ENCODE measurements at regions of chr12 and their contacts with region 1.

Region 1: DNA sequence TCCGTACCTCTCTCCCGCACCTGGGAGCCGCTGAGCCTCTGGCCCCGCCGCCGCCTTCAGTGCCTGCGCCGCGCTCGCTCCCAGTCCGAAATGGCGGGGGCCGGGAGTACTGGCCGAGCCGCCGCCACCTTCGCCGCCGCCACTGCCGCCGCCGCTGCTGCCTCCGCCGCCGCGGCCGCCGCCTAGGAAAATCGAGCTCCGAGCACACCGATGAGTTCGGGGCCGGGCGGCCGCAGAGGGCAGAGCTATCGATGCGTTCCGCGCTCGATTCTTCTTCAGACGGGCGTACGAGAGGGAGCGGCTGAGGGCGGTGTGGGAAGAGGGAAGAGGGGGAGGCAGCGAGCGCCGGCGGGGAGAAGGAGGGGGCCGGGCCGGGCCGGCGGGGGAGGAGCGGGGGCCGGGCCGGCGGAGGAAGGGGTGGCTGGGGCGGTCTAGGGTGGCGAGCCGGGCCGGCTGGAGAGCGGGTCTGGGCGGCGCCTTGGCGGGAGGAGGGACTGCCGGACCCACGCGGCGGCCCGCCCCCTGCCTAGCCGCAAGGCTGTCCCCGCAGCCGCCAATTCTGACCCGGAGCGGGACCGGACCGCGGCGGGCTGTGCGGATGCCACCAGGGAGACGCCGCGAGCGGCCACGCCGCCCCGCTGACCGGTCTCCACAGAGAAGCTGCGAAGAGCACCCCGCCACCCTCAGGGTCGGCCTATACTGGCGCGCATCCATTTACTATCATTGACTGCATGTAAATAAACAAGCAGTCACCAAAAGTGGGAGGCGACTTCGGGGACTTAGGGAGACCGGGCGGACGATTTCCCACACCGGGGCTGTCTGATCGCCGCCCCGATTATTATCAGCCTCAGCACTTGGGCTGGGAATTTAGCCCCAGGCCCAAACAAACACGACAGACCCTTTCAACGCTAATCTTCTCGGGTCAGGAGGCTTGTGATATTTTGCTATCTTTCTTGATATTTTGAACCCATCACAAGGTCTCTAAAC is at the start of gene KRAS:
- DNase-seq: peak; percentile 95
- ATAC-seq: peak; percentile 87
- H3K4me3 Mint-ChIP-seq: peak within 1 kb of the TSS; percentile 83
- H3K27ac Mint-ChIP-seq: peak within 1 kb of the TSS; percentile 89
- H3K4me1 Mint-ChIP-seq: peaks cover 34% of the 10 kb centered on the region
- H3K27me3 Mint-ChIP-seq: peaks cover 3% of the 10 kb centered on the region
- total RNA-seq, gene KRAS: 11.3 to 15.4 TPM

Region 2: DNA sequence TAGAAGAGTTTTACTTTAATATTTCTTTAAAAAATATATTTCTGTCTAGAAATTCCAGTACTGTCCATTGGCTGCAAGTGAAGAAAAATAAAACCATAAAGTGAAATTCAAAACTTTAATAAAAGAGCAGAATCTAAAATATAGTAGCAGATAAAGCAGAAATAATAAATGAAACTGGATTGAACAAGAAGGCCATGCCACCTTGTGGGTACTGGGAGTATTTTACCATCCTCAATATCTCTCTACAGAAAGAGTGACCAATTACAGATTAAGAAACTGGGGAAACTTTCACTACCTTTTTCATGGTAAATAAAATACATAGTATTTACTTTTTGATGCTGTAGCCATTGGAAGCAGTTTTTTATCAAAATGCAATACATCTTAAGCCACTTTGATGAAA is 522.7 kb before region 1 on chr12:
- CTCF ChIA-PET with region 1: no interaction called
- POLR2A ChIA-PET with region 1: no interaction called
- intact Hi-C with region 1: no loop called
- DNase-seq: no peak
- ATAC-seq: no peak
- H3K4me3 Mint-ChIP-seq: no peak overlapping the region
- H3K27ac Mint-ChIP-seq: peak overlapping the region; percentile 37
- H3K4me1 Mint-ChIP-seq: peaks cover 53% of the 10 kb centered on the region
- H3K27me3 Mint-ChIP-seq: no peaks in the 10 kb centered on the region

Region 3: DNA sequence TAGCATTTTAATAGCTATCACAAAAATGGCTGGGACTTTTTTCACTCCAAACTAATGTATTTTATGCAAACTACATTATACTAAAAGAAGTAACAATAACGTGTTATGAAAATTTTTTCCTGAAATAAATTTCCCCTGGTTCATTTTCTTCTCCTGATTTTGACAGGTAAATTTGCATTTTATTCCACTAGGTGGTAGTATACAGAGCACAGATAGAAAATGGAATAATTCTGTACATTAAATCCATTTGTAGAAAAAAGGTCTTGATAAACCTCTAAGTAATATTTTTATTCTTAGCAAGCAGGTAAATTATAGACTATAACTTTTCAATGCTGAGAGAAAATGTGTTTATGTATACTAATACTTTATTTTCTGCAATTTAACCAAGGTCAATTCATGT is 398.6 kb before region 1 on chr12:
- CTCF ChIA-PET with region 1: no interaction called
- POLR2A ChIA-PET with region 1: no interaction called
- intact Hi-C with region 1: no loop called
- DNase-seq: no peak
- ATAC-seq: no peak
- H3K4me3 Mint-ChIP-seq: no peak overlapping the region
- H3K27ac Mint-ChIP-seq: no peak overlapping the region
- H3K4me1 Mint-ChIP-seq: peaks cover 22% of the 10 kb centered on the region
- H3K27me3 Mint-ChIP-seq: peaks cover 7% of the 10 kb centered on the region

Region 4: DNA sequence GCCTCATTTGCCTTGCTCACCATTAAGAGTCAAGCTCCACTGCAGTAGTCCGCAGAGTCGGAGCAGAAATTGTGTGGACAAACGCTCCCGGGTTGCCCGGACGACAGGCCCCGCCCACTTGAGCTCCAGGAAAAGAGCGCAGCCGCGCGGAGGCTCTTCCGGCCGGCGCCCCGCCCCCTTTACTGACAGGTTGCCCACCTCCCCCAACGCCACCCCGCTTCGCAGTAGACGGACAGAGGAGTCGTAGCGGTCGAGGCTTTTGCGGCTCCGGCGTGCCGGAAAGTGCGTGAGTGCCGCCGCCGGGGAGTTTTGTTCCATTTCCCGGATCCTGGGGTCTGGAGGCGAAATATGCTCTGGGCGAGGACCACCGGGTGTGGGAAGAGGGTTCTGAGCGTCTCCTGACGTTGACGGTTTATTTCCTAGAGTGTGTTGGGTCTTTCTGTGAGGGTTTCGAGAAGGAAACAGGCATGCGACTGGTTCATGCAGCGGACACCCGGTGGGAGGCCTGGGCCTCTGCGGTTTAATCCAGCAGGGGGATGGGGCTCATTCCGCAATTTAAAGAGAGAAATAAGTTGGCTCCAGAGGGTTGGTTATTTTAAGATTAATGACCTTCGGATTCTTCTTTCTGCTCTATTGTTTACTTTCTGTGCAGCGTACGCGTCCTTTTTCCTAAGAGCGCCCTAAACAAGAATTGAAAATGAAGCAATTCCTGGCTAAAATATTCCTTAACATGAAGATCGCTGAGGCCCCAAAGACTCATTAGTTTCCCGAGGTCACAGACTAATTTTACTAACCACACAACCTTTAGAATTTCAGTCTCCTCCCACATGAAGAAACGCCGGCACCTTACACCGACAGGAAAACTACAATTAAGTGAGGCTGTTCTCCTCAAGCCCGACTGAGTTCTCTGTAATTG is 55.7 kb before region 1 on chr12 and contains the starts of genes DNAI7 and ETFRF1:
- CTCF ChIA-PET with region 1: interaction called, 4 read pairs
- POLR2A ChIA-PET with region 1: interaction called, 6 read pairs
- intact Hi-C with region 1: loop called (anchors 1 to 2 kb)
- DNase-seq: peak; percentile 97
- ATAC-seq: peak; percentile 98
- H3K4me3 Mint-ChIP-seq: peak within 1 kb of the TSS; percentile 91
- H3K27ac Mint-ChIP-seq: peak within 1 kb of the TSS; percentile 96
- H3K4me1 Mint-ChIP-seq: peaks cover 29% of the 10 kb centered on the region
- H3K27me3 Mint-ChIP-seq: no peaks in the 10 kb centered on the region
- total RNA-seq, gene DNAI7: not detected
- total RNA-seq, gene ETFRF1: 11.7 to 15.4 TPM

Region 5: GRCh38 chr12:25276199-25276937 is 25.3 kb after region 1 on chr12:
- CTCF ChIA-PET with region 1: interaction called, 3 read pairs
- POLR2A ChIA-PET with region 1: no interaction called
- intact Hi-C with region 1: loop called in 1 of 2 experiments (anchors 2 kb)
- DNase-seq: peak; percentile 90
- ATAC-seq: peak; percentile 97
- H3K4me3 Mint-ChIP-seq: peak overlapping the region; percentile 7
- H3K27ac Mint-ChIP-seq: peak overlapping the region; percentile 40
- H3K4me1 Mint-ChIP-seq: peaks cover 31% of the 10 kb centered on the region
- H3K27me3 Mint-ChIP-seq: no peaks in the 10 kb centered on the region

Region 6: GRCh38 chr12:25320123-25321006 is 69.3 kb after region 1 on chr12:
- CTCF ChIA-PET with region 1: no interaction called
- POLR2A ChIA-PET with region 1: no interaction called
- intact Hi-C with region 1: loop called (anchors 2 to 5 kb)
- DNase-seq: peak; percentile 13
- ATAC-seq: peak; percentile 76
- H3K4me3 Mint-ChIP-seq: peak overlapping the region; percentile 27
- H3K27ac Mint-ChIP-seq: peak overlapping the region; percentile 21
- H3K4me1 Mint-ChIP-seq: peaks cover 55% of the 10 kb centered on the region
- H3K27me3 Mint-ChIP-seq: peaks cover 1% of the 10 kb centered on the region

Region 7: DNA sequence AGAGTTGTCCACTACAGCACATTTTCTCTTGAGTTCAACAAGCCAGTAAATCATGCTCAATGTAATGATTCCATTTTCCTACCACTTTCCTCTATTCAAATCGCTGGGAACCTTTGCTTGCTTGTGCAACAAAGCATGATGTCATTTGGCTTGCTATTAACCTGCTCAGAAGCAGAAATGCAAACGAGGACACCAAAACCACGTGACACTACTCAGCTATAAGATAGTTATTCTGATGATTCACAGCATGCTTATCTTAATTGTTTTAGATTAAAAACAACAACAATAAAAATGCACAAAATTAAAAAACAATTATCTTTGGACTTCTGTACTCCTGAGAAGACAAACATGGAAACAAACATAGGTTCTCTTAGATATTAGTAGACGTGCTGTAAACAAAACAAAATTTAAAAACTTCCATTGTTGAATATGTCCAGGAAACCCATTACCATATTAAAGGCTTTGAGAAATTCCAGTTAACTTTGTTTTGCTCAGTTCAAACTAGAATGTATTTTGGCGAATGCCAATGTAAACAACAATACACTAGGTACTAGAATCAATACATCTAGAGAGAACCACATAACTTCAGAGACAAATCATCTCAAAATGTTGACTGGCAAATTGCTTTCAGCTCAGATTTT is 77.2 kb after region 1 on chr12:
- CTCF ChIA-PET with region 1: no interaction called
- POLR2A ChIA-PET with region 1: no interaction called
- intact Hi-C with region 1: loop called (anchors 2 to 5 kb)
- DNase-seq: no peak
- ATAC-seq: no peak
- H3K4me3 Mint-ChIP-seq: no peak overlapping the region
- H3K27ac Mint-ChIP-seq: no peak overlapping the region
- H3K4me1 Mint-ChIP-seq: peaks cover 23% of the 10 kb centered on the region
- H3K27me3 Mint-ChIP-seq: no peaks in the 10 kb centered on the region

Region 8: DNA sequence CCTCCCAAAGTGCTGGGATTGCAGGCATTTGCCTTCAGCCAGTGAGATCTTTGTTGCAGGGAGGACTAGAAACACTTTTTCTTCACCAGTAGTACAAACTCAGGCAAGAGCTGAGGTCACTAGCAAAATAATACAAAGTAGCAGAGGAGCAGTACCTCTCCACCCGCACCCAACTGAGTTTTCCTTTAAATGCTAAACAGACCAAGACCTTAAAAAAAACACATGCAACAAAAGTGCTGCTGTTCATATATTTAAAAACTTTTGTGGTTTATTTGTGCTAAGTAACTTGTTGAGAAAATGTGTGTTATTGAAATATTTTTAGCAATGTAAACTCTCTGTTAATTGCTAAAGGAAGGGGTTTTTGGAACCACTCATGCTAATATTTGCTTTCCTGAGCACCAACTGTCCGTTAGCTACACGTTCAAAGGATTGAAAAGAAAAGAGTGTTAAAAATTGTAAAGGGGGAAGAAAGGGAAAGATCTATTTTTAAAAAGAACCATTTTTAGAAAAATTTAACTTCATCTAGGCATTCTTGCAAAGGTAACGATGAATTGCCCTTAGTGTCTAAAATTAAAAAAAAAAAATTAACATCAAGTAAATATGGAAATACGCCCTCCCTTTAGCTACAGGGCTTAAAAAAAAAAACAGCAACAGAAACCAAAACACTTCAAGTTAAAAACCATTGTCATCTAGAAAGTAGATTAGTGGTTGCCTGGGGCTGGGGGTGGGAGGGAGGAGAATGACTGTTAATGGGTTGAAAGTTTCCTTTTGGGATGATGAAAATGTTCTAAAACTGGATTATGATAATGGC is 113.7 kb after region 1 on chr12:
- CTCF ChIA-PET with region 1: interaction called, 3 read pairs
- POLR2A ChIA-PET with region 1: no interaction called
- intact Hi-C with region 1: loop called in 1 of 2 experiments (anchors 1 kb)
- DNase-seq: peak; percentile 82
- ATAC-seq: peak; percentile 90
- H3K4me3 Mint-ChIP-seq: peak overlapping the region; percentile 31
- H3K27ac Mint-ChIP-seq: no peak overlapping the region
- H3K4me1 Mint-ChIP-seq: peaks cover 16% of the 10 kb centered on the region
- H3K27me3 Mint-ChIP-seq: peaks cover 15% of the 10 kb centered on the region